GM10248 (cell line): ENCODE measurements at regions of chr2 and their contacts with region 1.

Region 1: DNA sequence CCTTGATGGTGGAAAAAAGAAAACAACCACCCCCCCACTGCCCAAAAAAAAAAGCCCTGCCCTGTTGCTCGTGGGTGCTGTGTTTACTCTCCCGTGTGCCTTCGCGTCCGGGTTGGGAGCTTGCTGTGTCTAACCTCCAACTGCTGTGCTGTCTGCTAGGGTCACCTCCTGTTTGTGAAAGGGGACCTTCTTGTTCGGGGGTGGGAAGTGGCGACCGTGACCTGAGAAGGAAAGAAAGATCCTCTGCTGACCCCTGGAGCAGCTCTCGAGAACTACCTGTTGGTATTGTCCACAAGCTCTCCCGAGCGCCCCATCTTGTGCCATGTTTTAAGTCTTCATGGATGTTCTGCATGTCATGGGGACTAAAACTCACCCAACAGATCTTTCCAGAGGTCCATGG is 28.0 kb downstream of the MAL start:
- DNase-seq: no peak
- CTCF ChIP-seq: peak; percentile 46

Region 2: DNA sequence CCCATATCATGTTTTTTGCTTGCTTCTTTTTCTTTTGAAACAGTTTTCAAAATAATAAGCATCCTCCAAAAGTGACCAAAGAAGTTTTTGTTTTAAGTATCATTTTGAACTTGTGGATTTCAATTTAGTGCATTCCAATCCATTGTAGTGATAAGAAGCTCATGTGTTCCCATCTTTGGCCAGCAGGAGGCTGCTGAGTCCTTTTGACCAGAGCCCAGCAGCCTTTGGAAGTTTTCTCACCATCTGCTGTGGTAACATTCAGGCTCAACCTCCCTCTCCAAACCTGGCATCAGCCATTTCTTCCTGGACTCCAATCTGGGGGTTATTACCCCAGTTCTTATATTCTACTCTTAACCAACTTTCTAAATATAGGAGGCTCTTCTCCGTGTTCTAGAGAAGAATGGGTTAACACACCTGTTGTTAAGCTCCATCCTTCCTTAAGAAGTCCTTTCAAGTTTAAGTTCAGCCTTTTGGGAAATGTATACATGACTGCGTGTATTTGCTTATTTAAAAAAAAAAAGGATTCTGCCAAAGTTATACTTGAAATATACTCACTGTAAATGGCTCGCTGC is 67.1 kb before region 1 on chr2:
- CTCF ChIA-PET with region 1: interaction called, 20 read pairs
- POLR2A ChIA-PET with region 1: no interaction called
- DNase-seq: peak; percentile 67
- CTCF ChIP-seq: peak; percentile 54

Region 3: GRCh38 chr2:95012881-95013550 is 40.5 kb before region 1 on chr2:
- CTCF ChIA-PET with region 1: interaction called, 11 read pairs
- POLR2A ChIA-PET with region 1: no interaction called
- DNase-seq: no peak
- CTCF ChIP-seq: no peak

Region 4: DNA sequence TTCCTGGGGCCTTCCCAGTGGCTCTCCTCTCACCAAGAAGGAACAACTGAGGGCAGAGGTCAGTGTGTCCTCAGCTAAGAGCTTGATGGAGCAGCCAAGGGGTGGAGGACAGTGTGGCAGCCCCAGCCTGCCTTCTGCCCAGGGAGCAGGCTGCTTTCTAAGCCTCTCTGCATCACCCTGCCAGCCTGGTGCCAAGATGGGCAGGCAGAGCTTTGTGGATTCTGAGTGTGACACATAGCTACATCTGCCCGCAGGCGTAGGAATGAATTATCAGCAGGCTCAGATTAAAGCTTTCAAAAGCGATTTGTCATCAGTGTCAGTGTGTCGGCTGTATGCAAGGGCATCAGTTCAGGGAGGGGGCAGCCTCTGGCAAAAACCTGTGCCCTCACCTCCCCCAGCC is 19.3 kb before region 1 on chr2:
- CTCF ChIA-PET with region 1: interaction called, 13 read pairs
- POLR2A ChIA-PET with region 1: no interaction called
- DNase-seq: no peak
- CTCF ChIP-seq: no peak

Region 5: DNA sequence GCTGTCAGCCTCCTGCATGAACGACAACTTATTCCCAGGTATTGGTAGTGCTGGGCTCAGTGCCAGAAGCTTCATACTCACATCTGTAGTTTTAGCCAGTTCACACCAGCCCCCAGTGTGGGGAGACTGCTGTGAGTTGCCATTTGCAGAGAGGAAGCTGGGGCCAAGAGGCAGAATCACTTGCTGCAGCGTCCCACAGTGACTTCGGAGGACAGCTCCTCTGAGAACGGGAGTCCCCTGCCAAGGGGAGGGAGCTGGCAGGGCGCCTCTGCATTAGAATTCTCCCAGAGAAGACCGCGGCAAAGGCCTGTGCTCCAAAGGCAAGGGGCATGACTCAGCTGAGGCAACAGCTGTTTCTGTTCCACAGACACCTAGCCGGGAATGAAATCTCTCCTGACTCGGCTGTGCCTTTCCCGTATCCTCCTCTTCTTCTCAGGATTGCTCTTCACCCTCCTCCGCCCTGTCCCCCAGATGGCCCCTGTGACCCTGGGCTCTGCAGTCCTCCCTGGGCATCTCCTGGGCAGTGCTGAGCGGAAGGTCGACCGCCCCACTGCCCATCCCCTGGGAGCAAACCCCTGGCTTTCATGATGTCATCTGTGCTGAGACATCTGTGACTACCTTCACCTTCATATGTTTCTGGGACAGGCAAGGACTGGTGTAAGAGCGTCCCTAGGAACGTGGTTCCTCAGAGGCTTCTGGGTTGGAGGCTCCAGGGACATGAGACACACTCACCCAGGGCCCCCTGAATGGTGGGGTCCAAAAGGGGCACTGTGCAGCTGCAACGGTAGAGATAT is 10.0 kb before region 1 on chr2:
- CTCF ChIA-PET with region 1: interaction called, 29 read pairs
- POLR2A ChIA-PET with region 1: no interaction called
- DNase-seq: no peak
- CTCF ChIP-seq: no peak